Ascending aorta (tissue), 2 donors: ENCODE measurements at regions of chr4 and their contacts with region 1.

Region 1: DNA sequence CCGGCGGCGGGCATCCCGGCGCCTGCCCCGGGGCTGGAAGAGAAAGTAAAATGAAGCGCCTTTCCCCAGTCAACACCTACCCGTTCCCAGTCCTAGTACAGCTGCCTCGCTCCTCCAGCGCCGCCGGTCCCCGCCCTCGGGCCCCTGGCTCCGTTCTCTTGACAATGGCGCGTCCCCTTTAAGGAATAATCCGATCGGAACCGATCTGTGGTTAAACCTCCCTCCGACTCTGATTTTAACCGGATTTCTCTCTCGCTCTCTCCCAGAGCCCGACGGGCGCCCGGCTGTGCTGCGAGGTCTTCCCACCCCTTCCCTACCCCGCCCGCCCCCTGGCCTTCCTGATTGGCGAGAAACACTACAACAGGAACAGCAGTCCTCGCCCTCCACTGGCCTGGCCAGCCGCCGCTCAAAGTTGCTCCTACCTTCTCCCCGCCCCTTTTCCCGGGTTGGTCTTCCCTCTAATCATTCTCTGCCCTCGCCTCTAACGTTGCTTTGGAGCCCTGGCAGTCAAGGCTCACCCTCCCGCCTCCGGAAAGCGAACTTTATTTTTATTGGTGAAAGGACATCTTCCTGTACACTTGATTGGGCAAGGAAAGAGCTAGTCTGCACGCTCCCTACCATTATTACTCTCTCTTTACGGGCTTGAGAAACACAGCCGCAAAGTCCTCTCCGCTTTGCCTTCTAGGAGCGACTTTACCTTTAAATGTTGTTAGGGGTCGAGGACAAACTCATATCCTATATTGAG is at the start of gene FRYL:
- DNase-seq: peak; percentile 98 to 100
- H3K4me3 ChIP-seq: peak within 1 kb of the TSS; percentile 60 to 89
- H3K27ac ChIP-seq: peak within 1 kb of the TSS; percentile 85 to 95
- H3K4me1 ChIP-seq: peaks cover 0 to 20% of the 10 kb centered on the region in 2 donors
- H3K27me3 ChIP-seq: no peaks in the 10 kb centered on the region
- CTCF ChIP-seq: no peak
- total RNA-seq, gene FRYL: 40.6 TPM

Region 2: DNA sequence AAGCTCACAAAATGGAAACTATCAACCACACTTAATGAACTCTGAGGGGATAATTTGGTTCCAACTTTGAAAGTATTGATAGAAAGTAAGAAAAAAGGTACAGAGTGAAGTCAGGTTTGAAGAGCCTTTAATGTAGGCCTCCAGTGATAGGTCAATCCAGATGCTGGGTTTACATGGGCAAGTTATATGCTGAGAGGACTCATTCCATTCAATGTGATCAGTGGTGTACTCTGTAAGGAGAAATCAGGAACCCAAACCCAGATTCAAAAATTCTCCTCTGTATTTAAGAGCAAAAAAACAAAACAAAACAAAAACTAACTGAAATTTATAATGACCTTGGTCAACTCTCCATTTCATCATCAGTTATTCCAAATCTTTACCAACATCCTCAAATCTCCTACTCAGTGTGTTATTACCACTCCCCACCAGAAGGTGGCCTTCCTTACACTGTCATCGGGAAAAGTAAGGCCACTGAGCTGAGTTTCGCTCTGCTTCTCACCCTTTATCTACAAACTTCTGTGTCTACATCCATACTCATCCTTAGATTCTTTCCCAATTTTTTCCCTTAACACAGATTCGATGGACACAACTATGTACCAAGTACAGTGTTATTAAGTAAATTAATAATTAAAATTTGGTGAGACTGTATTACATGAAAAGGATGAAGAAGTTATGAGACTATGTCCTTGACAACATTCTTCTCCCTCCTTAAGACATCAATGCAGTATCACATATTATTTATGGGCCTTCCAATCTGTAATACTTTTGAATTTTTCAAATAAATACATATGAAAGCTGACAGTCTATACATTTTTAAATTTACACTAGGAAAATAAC is 201.8 kb before region 1 on chr4:
- intact Hi-C with region 1: loop called (anchors 5 kb)
- DNase-seq: peak in 1 of 2 donors; percentile 77
- H3K4me3 ChIP-seq: no peak overlapping the region
- H3K27ac ChIP-seq: no peak overlapping the region
- H3K4me1 ChIP-seq: no peaks in the 10 kb centered on the region
- H3K27me3 ChIP-seq: no peaks in the 10 kb centered on the region
- CTCF ChIP-seq: peak; percentile 70 to 87 (median 70)

Region 3: GRCh38 chr4:48668254-48669017 is 111.7 kb before region 1 on chr4:
- intact Hi-C with region 1: loop called (anchors 5 kb)
- DNase-seq: no peak
- H3K4me3 ChIP-seq: no peak overlapping the region
- H3K27ac ChIP-seq: peak overlapping the region in 1 of 2 donors; percentile 39
- H3K4me1 ChIP-seq: peaks cover 2 to 10% of the 10 kb centered on the region in 2 donors
- H3K27me3 ChIP-seq: no peaks in the 10 kb centered on the region
- CTCF ChIP-seq: no peak

Region 4: GRCh38 chr4:48718818-48719465 is 61.2 kb before region 1 on chr4:
- intact Hi-C with region 1: no loop called
- DNase-seq: no peak
- H3K4me3 ChIP-seq: no peak overlapping the region
- H3K27ac ChIP-seq: no peak overlapping the region
- H3K4me1 ChIP-seq: peaks cover 0 to 12% of the 10 kb centered on the region in 2 donors
- H3K27me3 ChIP-seq: no peaks in the 10 kb centered on the region
- CTCF ChIP-seq: no peak

Region 5: GRCh38 chr4:48801734-48802133 is 21.6 kb after region 1 on chr4:
- intact Hi-C with region 1: loop called (anchors 1 kb)
- DNase-seq: peak in 1 of 2 donors; percentile 75
- H3K4me3 ChIP-seq: peak overlapping the region in 1 of 2 donors; percentile 29
- H3K27ac ChIP-seq: peak overlapping the region; percentile 77 to 80
- H3K4me1 ChIP-seq: peaks cover 9 to 51% of the 10 kb centered on the region in 2 donors
- H3K27me3 ChIP-seq: no peaks in the 10 kb centered on the region
- CTCF ChIP-seq: no peak

Region 6: GRCh38 chr4:48830706-48831531 is 50.7 kb after region 1 on chr4 and contains the start of gene OCIAD1:
- intact Hi-C with region 1: loop called (anchors 1 kb)
- DNase-seq: peak; percentile 96 to 99
- H3K4me3 ChIP-seq: peak within 1 kb of the TSS; percentile 83 to 89
- H3K27ac ChIP-seq: peak within 1 kb of the TSS; percentile 81 to 94
- H3K4me1 ChIP-seq: peaks cover 0 to 11% of the 10 kb centered on the region in 2 donors
- H3K27me3 ChIP-seq: no peaks in the 10 kb centered on the region
- CTCF ChIP-seq: no peak
- total RNA-seq, gene OCIAD1: 146 TPM

Region 7: GRCh38 chr4:48858130-48858529 is 78.0 kb after region 1 on chr4:
- intact Hi-C with region 1: no loop called
- DNase-seq: no peak
- H3K4me3 ChIP-seq: no peak overlapping the region
- H3K27ac ChIP-seq: no peak overlapping the region
- H3K4me1 ChIP-seq: no peaks in the 10 kb centered on the region
- H3K27me3 ChIP-seq: no peaks in the 10 kb centered on the region
- CTCF ChIP-seq: no peak

Region 8: DNA sequence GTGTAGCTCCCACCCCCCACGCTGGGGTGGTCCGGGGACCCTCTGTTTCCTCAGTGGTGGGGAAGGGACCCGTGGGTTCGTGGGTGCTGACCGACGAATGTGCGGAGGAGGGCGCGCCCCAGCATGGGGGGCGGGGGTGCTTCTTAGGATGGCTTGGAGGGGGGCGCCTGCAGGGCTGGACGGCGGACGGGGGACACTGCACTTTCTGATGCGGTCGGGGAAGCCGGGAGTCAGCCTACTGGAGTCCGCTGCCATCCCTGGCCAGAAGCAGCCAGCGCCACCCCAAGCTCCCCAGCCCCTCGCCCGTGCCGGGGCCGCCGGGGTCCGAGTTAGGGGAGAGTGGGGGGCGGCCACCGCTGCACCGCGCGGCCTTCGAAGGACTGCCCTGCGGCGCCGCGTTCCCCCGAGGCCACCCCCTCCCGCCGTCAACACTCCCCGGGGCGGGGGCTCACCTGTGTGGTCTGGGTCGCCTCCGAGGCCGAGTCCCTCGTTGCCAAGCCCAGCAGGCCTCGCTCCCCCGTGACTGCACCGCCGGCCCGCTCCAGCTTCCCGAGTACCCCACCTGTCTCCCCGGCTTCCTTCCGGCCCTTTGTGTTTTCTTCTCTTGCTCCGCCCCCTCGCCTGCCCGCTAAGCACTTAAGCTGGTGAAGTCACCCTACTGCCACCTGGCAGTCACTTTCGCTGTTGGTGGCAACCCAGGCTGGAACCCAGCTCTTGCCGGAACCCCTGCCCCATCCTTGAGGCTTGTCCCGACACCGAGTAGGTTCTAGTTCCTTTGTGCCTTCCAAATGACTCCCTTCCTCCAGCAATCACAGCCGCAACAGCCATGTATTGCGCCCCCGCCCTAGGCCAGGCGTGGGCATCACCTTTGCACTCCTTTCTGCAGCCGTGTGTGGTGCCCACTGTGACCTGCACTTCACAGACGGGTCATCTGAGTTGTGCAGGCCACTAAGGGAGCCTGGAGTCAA is 126.3 kb after region 1 on chr4 and contains the start of gene OCIAD2:
- intact Hi-C with region 1: loop called (anchors 5 kb)
- DNase-seq: peak; percentile 22 to 82
- H3K4me3 ChIP-seq: peak within 1 kb of the TSS; percentile 84 to 92
- H3K27ac ChIP-seq: peak within 1 kb of the TSS in 1 of 2 donors; percentile 29
- H3K4me1 ChIP-seq: peaks cover 0 to 15% of the 10 kb centered on the region in 2 donors
- H3K27me3 ChIP-seq: no peaks in the 10 kb centered on the region
- CTCF ChIP-seq: peak in 2 of 3 experiments; percentile 5 to 40
- total RNA-seq, gene OCIAD2: 1.9 TPM